IMR-90 (cell line): ENCODE measurements at regions of chr5 and their contacts with region 1.

Region 1: GRCh38 chr5:14142827-14143548 is at the start of gene TRIO:
- DNase-seq: peak; percentile 91
- ATAC-seq: peak; percentile 77
- H3K4me3 ChIP-seq: peak within 1 kb of the TSS; percentile 94
- H3K27ac ChIP-seq: peak within 1 kb of the TSS; percentile 100
- H3K4me1 ChIP-seq: peaks cover 10% of the 10 kb centered on the region
- H3K27me3 ChIP-seq: no peaks in the 10 kb centered on the region
- CTCF ChIP-seq: peak; percentile 45
- POLR2A ChIP-seq: peak; percentile 73
- RAD21 ChIP-seq: peak; percentile 32
- total RNA-seq, gene TRIO: 487 and 522 TPM in 2 replicates

Region 2: GRCh38 chr5:14011089-14012004 is 131.6 kb before region 1 on chr5:
- CTCF ChIA-PET with region 1: no interaction called
- POLR2A ChIA-PET with region 1: interaction called, 6 read pairs
- dilution Hi-C with region 1: no loop called
- in situ Hi-C with region 1: no loop called
- intact Hi-C with region 1: loop called (anchors 1 kb)
- DNase-seq: peak; percentile 86
- ATAC-seq: peak; percentile 86
- H3K4me3 ChIP-seq: peak overlapping the region; percentile 71
- H3K27ac ChIP-seq: peak overlapping the region; percentile 91
- H3K4me1 ChIP-seq: peaks cover 19% of the 10 kb centered on the region
- H3K27me3 ChIP-seq: no peaks in the 10 kb centered on the region
- CTCF ChIP-seq: peak; percentile 24; the same call in 1 of the 2 replicates
- POLR2A ChIP-seq: peak; percentile 72; the same call in 1 of the 2 replicates
- RAD21 ChIP-seq: peak; percentile 30

Region 3: DNA sequence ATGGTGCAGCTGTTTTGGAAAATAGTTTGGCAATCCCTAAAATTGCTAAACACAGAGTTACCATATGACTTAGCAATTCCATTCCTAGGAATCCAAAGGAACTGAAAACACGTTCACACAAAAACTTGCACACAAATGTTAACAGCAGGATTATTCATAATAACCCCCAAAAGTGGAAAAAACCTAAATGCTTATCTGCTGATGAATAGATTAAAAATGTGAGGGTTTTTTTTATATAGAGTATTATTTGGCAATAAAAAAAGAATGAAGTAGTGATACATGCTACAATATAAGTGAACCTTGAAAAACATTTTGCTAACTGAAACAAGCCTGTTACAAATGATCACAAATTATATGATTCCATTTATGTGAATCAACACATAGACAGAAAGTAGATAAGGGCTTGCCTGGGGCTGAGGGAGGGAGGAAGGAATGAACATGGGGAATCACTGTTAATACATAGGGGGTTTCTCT is 45.0 kb before region 1 on chr5:
- CTCF ChIA-PET with region 1: no interaction called
- POLR2A ChIA-PET with region 1: interaction called, 17 read pairs
- dilution Hi-C with region 1: no loop called
- in situ Hi-C with region 1: no loop called
- intact Hi-C with region 1: no loop called
- DNase-seq: peak; percentile 94
- ATAC-seq: peak; percentile 73
- H3K4me3 ChIP-seq: no peak overlapping the region
- H3K27ac ChIP-seq: peak overlapping the region; percentile 94
- H3K4me1 ChIP-seq: peaks cover 6% of the 10 kb centered on the region; the same call in 1 of the 2 replicates
- H3K27me3 ChIP-seq: no peaks in the 10 kb centered on the region
- CTCF ChIP-seq: no peak
- POLR2A ChIP-seq: no peak
- RAD21 ChIP-seq: 0 out of 2 replicates have a peak, but pooled peaks have one; percentile 1

Region 4: GRCh38 chr5:14270209-14270702 is 127.3 kb after region 1 on chr5:
- CTCF ChIA-PET with region 1: interaction called, 4 read pairs
- POLR2A ChIA-PET with region 1: no interaction called
- dilution Hi-C with region 1: no loop called
- in situ Hi-C with region 1: no loop called
- intact Hi-C with region 1: loop called (anchors 2 kb)
- DNase-seq: peak; percentile 64
- ATAC-seq: peak; percentile 52
- H3K4me3 ChIP-seq: no peak overlapping the region
- H3K27ac ChIP-seq: peak overlapping the region; percentile 89
- H3K4me1 ChIP-seq: peaks cover 34% of the 10 kb centered on the region
- H3K27me3 ChIP-seq: no peaks in the 10 kb centered on the region
- CTCF ChIP-seq: peak; percentile 76
- POLR2A ChIP-seq: no peak
- RAD21 ChIP-seq: peak; percentile 71

Region 5: DNA sequence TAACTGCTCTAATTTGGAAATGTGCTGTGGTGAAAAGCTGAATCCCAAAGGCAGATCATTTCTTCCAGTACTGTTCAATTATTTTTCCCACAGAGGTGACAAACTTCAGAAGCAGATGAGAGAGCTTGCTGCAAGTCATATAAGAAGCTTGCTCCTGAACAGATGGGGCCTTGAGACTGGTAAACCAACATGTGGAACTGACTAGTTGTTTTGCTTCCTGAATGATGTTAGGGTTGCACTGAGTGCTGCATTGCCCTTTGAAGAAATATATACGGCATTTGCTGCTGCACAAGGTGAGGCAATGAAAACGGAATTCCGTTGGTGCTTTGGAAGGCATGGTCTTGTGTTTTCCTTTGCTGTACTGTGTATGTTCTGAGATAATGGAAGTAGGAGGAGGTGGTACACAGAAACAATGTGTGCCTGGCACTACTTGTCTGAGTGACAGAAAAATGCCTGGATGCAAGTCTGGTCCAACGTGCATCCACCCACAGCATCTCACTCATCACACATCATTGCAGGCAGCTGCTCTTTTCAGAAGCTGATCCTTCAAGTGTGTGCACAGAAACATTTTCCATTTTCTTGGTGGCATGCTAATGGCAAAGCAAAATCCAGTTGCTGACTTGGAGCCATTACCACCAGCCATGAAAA is 651.7 kb after region 1 on chr5:
- CTCF ChIA-PET with region 1: no interaction called
- POLR2A ChIA-PET with region 1: no interaction called
- dilution Hi-C with region 1: no loop called
- in situ Hi-C with region 1: no loop called
- intact Hi-C with region 1: no loop called
- DNase-seq: no peak
- ATAC-seq: no peak
- H3K4me3 ChIP-seq: no peak overlapping the region
- H3K27ac ChIP-seq: no peak overlapping the region
- H3K4me1 ChIP-seq: peaks cover 3% of the 10 kb centered on the region; the same call in 1 of the 2 replicates
- H3K27me3 ChIP-seq: no peaks in the 10 kb centered on the region
- CTCF ChIP-seq: no peak
- POLR2A ChIP-seq: no peak
- RAD21 ChIP-seq: no peak